Activated T-helper 1 cell treated with anti-CD3 and anti-CD28 coated beads, Interleukin-12 subunit alpha, Interleukin-12 subunit beta, Interleukin-2, Interleukin-4 antibody, amounts not matched to agents 30 ng/mL and 10 ng/mL and 1 ng/mL, durations not matched to agents 14 hours and 24 hours and 36 hours (primary cell): ENCODE measurements at regions of chr19 and their contacts with region 1.

Region 1: DNA sequence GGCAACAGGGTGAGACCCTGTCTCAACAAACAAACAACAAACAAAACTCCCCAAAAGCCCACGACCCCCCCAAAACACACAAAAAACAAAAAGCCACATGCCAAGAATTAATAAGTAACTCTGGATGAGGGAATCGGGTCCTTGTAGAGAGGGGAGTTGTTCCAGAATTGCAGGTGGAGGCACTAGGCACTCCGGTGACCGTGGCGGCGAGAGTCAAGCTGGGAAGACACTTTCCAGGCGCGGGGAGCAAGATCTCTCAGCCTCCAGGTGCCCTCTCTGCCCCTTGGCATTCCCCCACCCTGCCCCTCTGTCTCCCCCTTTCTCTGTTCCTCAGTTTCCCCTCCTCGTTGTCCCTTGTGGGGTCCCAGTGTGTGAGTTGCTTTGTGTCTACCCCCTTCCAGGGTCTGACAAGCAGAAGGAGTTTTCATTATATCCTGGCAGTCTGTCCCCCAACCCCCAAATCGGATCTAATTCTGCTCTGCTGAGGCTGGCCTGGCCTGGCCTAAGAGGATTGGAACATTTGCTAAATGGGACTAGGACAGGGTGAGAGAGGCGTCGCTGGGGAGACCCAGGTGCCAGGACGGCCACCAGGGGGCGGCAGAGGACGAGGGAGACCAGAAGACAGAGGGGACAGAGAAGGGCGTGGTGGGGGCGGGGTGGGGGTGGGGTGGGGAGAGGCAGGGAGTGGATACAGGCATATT is 8.3 kb upstream of the CRX start:
- DNase-seq: peak; percentile 49
- H3K4me3 Mint-ChIP-seq: no peak overlapping the region
- H3K27ac Mint-ChIP-seq: no peak overlapping the region
- H3K4me1 Mint-ChIP-seq: no peaks in the 10 kb centered on the region
- H3K27me3 Mint-ChIP-seq: peaks cover 2% of the 10 kb centered on the region

Region 2: GRCh38 chr19:47863514-47863936 is 50.1 kb after region 1 on chr19:
- intact Hi-C with region 1: loop called (anchors 1 kb)
- DNase-seq: peak; percentile 67
- H3K4me3 Mint-ChIP-seq: no peak overlapping the region
- H3K27ac Mint-ChIP-seq: no peak overlapping the region
- H3K4me1 Mint-ChIP-seq: no peaks in the 10 kb centered on the region
- H3K27me3 Mint-ChIP-seq: peaks cover 8% of the 10 kb centered on the region